Lower leg skin (tissue), 4 donors: ENCODE measurements at regions of chr5 and their contacts with region 1.

Region 1: DNA sequence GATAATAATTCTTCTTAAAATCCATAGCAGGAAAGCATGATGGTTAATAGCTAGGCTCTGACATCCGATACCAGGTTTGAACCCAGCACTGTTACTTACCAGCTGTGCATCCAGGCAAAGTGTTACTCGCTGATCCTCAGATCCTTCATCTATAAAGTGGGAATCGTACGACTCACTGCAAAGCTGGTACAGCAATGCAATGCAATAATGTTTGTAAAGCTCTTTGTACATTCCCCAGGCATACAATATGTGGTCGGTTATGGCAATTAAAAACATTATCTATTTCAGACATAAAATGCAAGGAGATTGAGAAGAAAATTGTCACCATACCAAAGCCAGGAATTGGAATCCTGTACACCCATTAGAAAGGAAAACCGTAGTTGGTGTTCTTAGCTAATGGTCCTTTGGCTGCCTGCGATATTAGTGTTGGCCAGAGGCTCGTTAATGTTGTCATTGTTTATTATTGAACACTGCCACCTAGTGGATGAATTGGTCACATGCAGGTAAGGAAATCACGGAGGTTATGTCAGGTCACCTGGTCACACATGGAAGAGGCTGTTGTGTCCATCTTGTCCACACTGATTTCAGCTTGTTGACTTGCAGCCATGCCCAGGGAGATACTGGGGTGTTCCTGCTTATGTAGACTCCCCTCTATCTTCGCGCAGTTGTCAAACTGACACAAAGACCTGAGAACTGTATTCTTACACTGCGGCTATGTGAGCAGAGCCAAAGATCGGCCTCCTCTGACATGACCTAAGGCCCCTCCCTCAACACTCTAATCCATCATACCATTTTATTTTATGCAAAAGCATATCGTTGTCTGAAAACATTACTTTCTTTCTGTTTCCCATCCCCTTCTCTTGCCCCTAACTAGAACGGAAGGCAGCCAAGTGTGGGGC is 87.5 kb upstream of the PPP2R2B start:
- DNase-seq: peak in 1 of 2 donors; percentile 72
- H3K4me3 ChIP-seq: no peak overlapping the region
- CTCF ChIP-seq: peak in 1 of 3 donors; percentile 50
- POLR2A ChIP-seq: no peak

Region 2: DNA sequence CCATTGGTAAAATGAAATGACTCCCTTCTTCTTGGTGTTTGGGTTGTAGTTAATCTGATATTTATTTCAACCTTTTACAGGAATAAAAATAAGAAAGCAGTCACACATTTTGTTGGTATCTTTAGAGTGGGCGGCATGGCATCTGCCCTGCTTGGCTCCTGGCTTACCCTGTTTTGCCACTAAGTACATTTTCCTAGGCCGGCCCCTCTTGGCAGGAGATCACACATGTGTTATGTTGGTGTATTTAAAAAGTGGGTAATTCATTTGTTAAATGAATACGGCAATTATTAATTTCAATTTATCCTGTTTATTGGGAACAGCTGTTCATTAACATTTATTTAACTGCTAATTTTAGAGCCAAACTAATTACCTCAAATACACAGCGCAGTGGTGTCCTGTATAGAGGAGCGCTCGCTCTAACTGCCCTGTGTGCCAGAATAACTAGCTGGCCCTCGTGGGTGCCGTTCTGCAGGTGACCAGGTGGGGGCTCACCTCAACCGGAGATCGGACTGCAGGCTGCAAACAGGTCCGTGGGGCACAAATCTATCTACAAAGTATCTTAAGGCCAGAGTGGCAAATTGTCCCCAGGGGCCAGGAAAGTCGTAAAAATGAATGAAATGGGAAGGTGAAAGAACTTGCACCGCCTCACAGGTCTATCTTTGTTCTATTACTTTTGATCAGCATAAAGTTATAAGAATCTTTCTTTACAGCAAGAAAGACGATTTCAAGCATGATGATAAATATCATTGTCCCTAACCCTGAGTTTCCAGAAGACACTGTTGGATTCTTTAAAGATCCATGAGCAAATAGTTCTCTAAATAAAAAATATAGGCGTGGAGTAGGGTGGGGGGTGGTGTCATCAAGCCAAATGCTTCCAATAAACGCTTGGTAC is 423.8 kb before region 1 on chr5:
- intact Hi-C with region 1: loop called (anchors 5 kb)
- DNase-seq: peak; percentile 50 to 90
- H3K4me3 ChIP-seq: no peak overlapping the region
- CTCF ChIP-seq: no peak
- POLR2A ChIP-seq: no peak

Region 3: GRCh38 chr5:146662229-146662628 is 303.8 kb before region 1 on chr5:
- intact Hi-C with region 1: loop called (anchors 5 kb)
- DNase-seq: peak in 1 of 2 donors; percentile 18
- H3K4me3 ChIP-seq: no peak overlapping the region
- CTCF ChIP-seq: peak in 1 of 3 donors; percentile 10
- POLR2A ChIP-seq: no peak